ENCODE measurements at regions of chr17 and their contacts with region 1.

Region 1: DNA sequence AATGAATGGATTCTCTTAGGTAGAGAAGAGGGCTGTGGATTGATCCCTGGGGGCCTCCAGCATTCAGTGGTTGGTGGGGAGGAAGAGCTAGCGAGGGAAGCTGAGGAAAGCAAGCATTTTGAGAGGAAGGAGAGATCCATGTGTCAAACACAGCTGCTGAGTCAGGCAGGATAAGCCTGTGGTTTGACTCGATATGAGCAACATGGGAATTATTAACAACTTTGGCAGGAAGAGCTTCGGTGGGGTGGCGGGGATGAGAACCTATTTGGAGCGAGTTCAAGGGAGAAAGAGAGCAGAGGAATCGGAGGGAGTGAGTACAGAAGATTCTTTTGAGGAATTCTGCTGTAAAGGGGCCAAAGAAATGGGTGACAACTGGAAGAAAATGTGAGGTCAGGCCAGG is 59.5 kb upstream of the CDC42EP4 start:
- DNase-seq: peak; percentile 39
- H3K4me3 Mint-ChIP-seq: peak overlapping the region; percentile 1
- H3K27ac Mint-ChIP-seq: peak overlapping the region; percentile 2
- H3K4me1 Mint-ChIP-seq: peaks cover 12% of the 10 kb centered on the region
- H3K27me3 Mint-ChIP-seq: peaks cover 48% of the 10 kb centered on the region
- CTCF ChIP-seq: no peak

Region 2: DNA sequence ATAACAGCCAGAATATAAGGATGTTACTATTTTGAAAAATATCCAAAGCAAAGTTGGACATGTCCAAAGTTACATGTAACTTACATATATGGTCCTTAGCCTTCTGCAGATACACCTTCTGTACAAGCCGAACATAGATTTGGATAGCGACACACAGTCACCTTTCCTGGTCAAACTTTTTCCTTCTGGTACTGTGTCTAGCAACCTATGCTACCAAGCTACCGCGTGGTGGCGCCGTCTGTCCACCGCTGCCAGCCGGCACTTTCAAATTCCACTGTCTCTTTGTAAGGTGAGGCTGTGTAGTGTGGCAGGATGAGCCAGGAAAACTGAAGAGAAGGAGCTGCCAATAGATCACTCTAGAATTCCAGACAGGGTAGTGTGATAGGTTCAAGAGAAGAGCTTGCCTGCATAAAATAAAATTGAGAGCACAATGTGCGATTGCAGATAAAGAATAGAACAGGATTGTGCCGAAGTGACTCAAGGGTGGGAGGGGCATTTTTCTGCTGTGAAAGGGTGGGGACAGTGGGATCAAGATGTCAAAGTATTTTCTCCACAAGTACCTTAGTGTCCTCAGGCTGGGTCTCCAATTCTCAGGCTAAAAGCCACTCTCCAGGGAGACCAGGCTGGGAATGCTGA is 645.7 kb before region 1 on chr17:
- CTCF ChIA-PET with region 1: interaction called, 5 read pairs
- intact Hi-C with region 1: loop called (anchors 5 kb)
- DNase-seq: peak; percentile 77
- H3K4me3 Mint-ChIP-seq: no peak overlapping the region
- H3K27ac Mint-ChIP-seq: peak overlapping the region; percentile 2
- H3K4me1 Mint-ChIP-seq: peaks cover 45% of the 10 kb centered on the region
- H3K27me3 Mint-ChIP-seq: no peaks in the 10 kb centered on the region
- CTCF ChIP-seq: peak; percentile 90

Region 3: DNA sequence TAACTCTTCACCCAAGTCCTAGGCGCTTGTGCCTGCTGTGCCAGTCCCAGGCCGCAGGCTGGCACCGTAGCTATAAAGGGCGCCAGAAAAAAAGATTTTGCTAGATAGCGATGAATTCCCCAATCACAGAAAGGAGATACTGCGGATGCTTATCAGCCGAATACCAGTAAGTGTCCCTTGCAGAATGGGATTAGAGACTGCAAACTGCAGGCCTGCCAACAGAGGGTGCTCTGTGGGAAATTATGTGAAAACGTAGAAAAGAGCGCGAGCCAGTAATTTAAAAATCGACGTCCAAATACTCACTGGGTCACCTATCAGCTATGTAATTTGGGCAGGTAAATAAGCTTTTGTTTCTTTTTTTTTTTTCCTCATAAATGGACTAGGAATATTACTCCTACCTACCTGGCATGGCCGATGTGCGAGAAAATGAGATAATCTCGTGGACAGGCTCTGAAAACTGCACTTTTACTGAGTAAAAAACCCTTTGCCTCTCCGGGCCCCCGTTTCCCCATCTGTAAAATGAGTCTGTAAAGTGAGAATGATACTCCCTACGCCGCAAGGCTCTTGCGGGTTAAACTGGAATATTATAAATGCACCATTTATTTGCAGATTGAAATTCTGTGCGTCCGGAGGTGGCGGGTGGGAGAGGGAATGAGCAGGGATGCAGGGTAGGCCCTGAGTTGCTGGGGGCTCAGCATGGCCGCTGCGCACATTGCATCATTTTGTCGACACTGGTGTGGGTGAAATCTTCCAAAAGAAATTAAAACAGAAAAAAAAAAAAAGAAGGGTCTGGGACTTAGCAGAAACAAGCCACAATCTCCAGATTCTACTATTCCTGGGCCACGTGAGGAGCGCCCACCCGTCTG is 179.6 kb before region 1 on chr17:
- CTCF ChIA-PET with region 1: no interaction called
- intact Hi-C with region 1: loop called (anchors 2 kb)
- DNase-seq: peak; percentile 68
- H3K4me3 Mint-ChIP-seq: peak overlapping the region; percentile 98
- H3K27ac Mint-ChIP-seq: no peak overlapping the region
- H3K4me1 Mint-ChIP-seq: peaks cover 7% of the 10 kb centered on the region
- H3K27me3 Mint-ChIP-seq: no peaks in the 10 kb centered on the region
- CTCF ChIP-seq: peak; percentile 69

Region 4: GRCh38 chr17:73231841-73232586 is 139.3 kb before region 1 on chr17:
- CTCF ChIA-PET with region 1: interaction called, 11 read pairs
- intact Hi-C with region 1: no loop called
- DNase-seq: peak; percentile 97
- H3K4me3 Mint-ChIP-seq: peak overlapping the region; percentile 97
- H3K27ac Mint-ChIP-seq: peak overlapping the region; percentile 93
- H3K4me1 Mint-ChIP-seq: peaks cover 44% of the 10 kb centered on the region
- H3K27me3 Mint-ChIP-seq: no peaks in the 10 kb centered on the region
- CTCF ChIP-seq: no peak

Region 5: DNA sequence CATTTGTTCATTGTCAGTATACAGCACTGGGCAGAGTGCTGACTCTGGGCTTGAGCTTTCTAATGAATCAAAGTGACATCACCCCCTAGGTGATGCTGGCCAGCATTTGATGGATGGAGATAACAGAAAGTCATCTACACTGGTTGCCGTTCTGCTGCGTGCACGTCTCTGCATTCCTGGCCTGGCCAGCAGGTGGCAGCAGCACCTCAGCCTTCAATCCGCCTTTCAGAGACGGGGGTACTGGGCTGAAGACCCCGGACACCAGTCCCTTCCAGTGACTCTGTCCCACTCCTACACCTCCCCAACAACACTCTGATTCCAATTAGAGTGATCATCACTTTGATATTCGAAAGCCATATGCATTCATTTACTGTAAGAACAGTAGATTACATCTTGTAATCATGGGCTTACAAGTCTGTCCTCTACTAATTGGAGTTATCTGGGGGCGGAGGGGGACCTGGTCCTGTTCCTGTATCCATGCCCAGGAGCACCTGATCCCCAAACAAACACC is 115.6 kb before region 1 on chr17:
- CTCF ChIA-PET with region 1: interaction called, 22 read pairs
- intact Hi-C with region 1: loop called (anchors 1 kb)
- DNase-seq: peak; percentile 56
- H3K4me3 Mint-ChIP-seq: no peak overlapping the region
- H3K27ac Mint-ChIP-seq: no peak overlapping the region
- H3K4me1 Mint-ChIP-seq: peaks cover 8% of the 10 kb centered on the region
- H3K27me3 Mint-ChIP-seq: peaks cover 15% of the 10 kb centered on the region
- CTCF ChIP-seq: peak; percentile 98

Region 6: DNA sequence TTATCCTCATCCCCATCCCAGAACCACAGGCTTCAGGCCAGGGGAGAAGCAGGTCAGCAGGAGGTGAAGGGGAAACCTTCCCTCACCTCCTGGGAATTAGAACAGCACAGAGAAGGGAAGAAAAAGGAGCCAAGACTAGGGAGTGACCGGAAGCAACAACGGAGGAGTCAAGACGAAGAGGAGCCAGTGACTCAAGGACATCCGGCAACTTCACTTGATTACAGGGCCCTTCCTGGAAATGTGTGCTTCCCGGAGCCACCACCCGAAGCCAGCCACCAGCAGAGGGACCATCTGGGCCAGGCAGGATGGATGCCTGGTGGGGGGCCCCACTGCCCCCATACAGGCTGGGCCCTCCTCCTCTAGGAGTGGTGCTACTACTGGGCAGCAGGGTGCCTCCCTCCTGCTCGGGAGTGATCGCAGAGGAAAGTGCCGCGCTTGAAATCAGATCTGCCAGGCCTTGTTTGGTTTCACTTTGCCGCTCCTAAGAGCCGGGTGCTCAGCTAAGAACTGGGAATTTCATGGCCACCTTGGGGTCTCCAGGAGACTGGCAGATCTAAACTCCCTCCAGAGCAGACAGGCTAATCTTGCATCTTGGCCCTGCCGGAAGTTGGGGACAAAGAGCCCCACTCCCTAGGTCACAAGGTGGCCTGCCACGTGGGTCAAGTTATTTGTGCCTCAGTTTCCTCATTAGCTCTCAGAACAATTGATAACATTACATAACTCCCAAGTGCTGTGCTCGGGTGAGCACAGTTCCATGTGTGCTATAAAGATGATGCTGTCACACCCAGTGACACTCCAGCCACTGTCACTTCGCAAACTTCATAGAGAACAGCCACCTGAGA is 66.1 kb before region 1 on chr17:
- CTCF ChIA-PET with region 1: interaction called, 18 read pairs
- intact Hi-C with region 1: loop called (anchors 5 kb)
- DNase-seq: peak; percentile 63
- H3K4me3 Mint-ChIP-seq: peak overlapping the region; percentile 62
- H3K27ac Mint-ChIP-seq: peak overlapping the region; percentile 55
- H3K4me1 Mint-ChIP-seq: peaks cover 68% of the 10 kb centered on the region
- H3K27me3 Mint-ChIP-seq: no peaks in the 10 kb centered on the region
- CTCF ChIP-seq: no peak

Region 7: GRCh38 chr17:73311781-73312641 is 59.3 kb before region 1 on chr17 and contains the start of gene CDC42EP4:
- CTCF ChIA-PET with region 1: interaction called, 18 read pairs
- intact Hi-C with region 1: loop called (anchors 5 kb)
- DNase-seq: peak; percentile 97
- H3K4me3 Mint-ChIP-seq: peak within 1 kb of the TSS; percentile 94
- H3K27ac Mint-ChIP-seq: peak within 1 kb of the TSS; percentile 93
- H3K4me1 Mint-ChIP-seq: peaks cover 27% of the 10 kb centered on the region
- H3K27me3 Mint-ChIP-seq: no peaks in the 10 kb centered on the region
- CTCF ChIP-seq: no peak
- total RNA-seq, gene CDC42EP4: 50.2 and 60.1 TPM in 2 replicates

Region 8: DNA sequence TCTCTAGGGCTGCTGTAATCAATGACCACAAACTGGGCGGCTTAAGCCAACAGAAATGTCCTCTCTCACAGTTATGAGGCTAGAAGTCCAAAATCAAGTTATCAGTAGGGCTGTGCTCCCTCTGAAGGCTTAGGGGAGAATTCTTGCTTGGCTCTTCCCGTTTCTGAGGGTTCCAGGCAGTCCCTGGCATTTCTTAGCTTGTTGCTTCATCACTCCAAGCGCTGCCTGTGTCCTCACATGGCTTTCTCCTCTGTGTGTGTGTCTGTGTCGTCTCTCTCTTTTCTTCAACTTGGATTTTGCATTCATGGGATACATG is 45.8 kb before region 1 on chr17:
- CTCF ChIA-PET with region 1: no interaction called
- intact Hi-C with region 1: no loop called
- DNase-seq: no peak
- H3K4me3 Mint-ChIP-seq: no peak overlapping the region
- H3K27ac Mint-ChIP-seq: no peak overlapping the region
- H3K4me1 Mint-ChIP-seq: no peaks in the 10 kb centered on the region
- H3K27me3 Mint-ChIP-seq: peaks cover 26% of the 10 kb centered on the region
- CTCF ChIP-seq: no peak